ENCODE measurements at regions of chr11 and their contacts with region 1.

Region 1: GRCh38 chr11:133927690-133928627 is 28.8 kb downstream of the IGSF9B start:
- DNase-seq: peak; percentile 84
- H3K4me3 Mint-ChIP-seq: peak overlapping the region; percentile 31
- H3K27ac Mint-ChIP-seq: no peak overlapping the region
- H3K4me1 Mint-ChIP-seq: peaks cover 9% of the 10 kb centered on the region
- H3K27me3 Mint-ChIP-seq: no peaks in the 10 kb centered on the region
- CTCF ChIP-seq: peak; percentile 78

Region 2: GRCh38 chr11:133872160-133872559 is 55.8 kb before region 1 on chr11:
- CTCF ChIA-PET with region 1: no interaction called
- intact Hi-C with region 1: no loop called
- DNase-seq: no peak
- H3K4me3 Mint-ChIP-seq: no peak overlapping the region
- H3K27ac Mint-ChIP-seq: no peak overlapping the region
- H3K4me1 Mint-ChIP-seq: no peaks in the 10 kb centered on the region
- H3K27me3 Mint-ChIP-seq: no peaks in the 10 kb centered on the region
- CTCF ChIP-seq: no peak

Region 3: GRCh38 chr11:134098566-134099184 is 170.7 kb after region 1 on chr11:
- CTCF ChIA-PET with region 1: interaction called, 16 read pairs
- intact Hi-C with region 1: loop called (anchors 1 kb)
- DNase-seq: no peak
- H3K4me3 Mint-ChIP-seq: no peak overlapping the region
- H3K27ac Mint-ChIP-seq: no peak overlapping the region
- H3K4me1 Mint-ChIP-seq: no peaks in the 10 kb centered on the region
- H3K27me3 Mint-ChIP-seq: peaks cover 14% of the 10 kb centered on the region
- CTCF ChIP-seq: peak; percentile 31

Region 4: GRCh38 chr11:134139873-134140331 is 211.9 kb after region 1 on chr11:
- CTCF ChIA-PET with region 1: no interaction called
- intact Hi-C with region 1: loop called (anchors 1 kb)
- DNase-seq: peak; percentile 41
- H3K4me3 Mint-ChIP-seq: no peak overlapping the region
- H3K27ac Mint-ChIP-seq: no peak overlapping the region
- H3K4me1 Mint-ChIP-seq: no peaks in the 10 kb centered on the region
- H3K27me3 Mint-ChIP-seq: no peaks in the 10 kb centered on the region
- CTCF ChIP-seq: peak; percentile 52